H1 (cell line): ENCODE measurements at regions of chr22 and their contacts with region 1.

Region 1: GRCh38 chr22:38214256-38215056 is 12.7 kb downstream of the MAFF start:
- DNase-seq: peak; percentile 44 to 95
- H3K4me3 ChIP-seq: peak overlapping the region; percentile 29 to 57 (median 38)
- H3K27ac ChIP-seq: no peak overlapping the region
- H3K4me1 ChIP-seq: peaks cover 10 to 26% (median 17%) of the 10 kb centered on the region in 4 experiments
- H3K27me3 ChIP-seq: peaks cover 0 to 16% (median 13%) of the 10 kb centered on the region in 4 experiments; a peak in 5 of 7 replicates
- CTCF ChIP-seq: peak in 1 of 3 experiments; percentile 0; a peak in 1 of 4 replicates
- EP300 ChIP-seq: no peak
- POLR2A ChIP-seq: peak in 1 of 2 experiments; percentile 54; a peak in 2 of 3 replicates
- RAD21 ChIP-seq: no peak

Region 2: GRCh38 chr22:38201710-38202436 is 12.6 kb before region 1 on chr22 and contains the start of gene MAFF:
- CTCF ChIA-PET with region 1: interaction called, 12 read pairs
- POLR2A ChIA-PET with region 1: interaction called, 65 read pairs
- DNase-seq: peak; percentile 77 to 93
- H3K4me3 ChIP-seq: peak within 1 kb of the TSS; percentile 64 to 82 (median 71)
- H3K27ac ChIP-seq: peak within 1 kb of the TSS; percentile 75; the same call in 1 of the 2 replicates
- H3K4me1 ChIP-seq: peaks cover 0 to 10% (median 6%) of the 10 kb centered on the region in 4 experiments; a peak in 6 of 7 replicates
- H3K27me3 ChIP-seq: peaks cover 0 to 14% (median 11%) of the 10 kb centered on the region in 4 experiments; a peak in 5 of 7 replicates
- CTCF ChIP-seq: no peak
- EP300 ChIP-seq: no peak
- POLR2A ChIP-seq: peak in 1 of 2 experiments; percentile 78; a peak in 2 of 3 replicates
- RAD21 ChIP-seq: no peak
- total RNA-seq, gene MAFF: 6.2 and 6.3 TPM in 2 replicates

Region 3: GRCh38 chr22:38230108-38230825 is 15.8 kb after region 1 on chr22:
- CTCF ChIA-PET with region 1: interaction called, 24 read pairs
- POLR2A ChIA-PET with region 1: interaction called, 3 read pairs
- DNase-seq: no peak
- H3K4me3 ChIP-seq: no peak overlapping the region
- H3K27ac ChIP-seq: no peak overlapping the region
- H3K4me1 ChIP-seq: no peaks in the 10 kb centered on the region
- H3K27me3 ChIP-seq: no peaks in the 10 kb centered on the region; a peak in 1 of 7 replicates
- CTCF ChIP-seq: peak; percentile 45 to 65 (median 55)
- EP300 ChIP-seq: no peak
- POLR2A ChIP-seq: no peak
- RAD21 ChIP-seq: peak; percentile 69